AG04449 (cell line): ENCODE measurements at regions of chr5 and their contacts with region 1.

Region 1: DNA sequence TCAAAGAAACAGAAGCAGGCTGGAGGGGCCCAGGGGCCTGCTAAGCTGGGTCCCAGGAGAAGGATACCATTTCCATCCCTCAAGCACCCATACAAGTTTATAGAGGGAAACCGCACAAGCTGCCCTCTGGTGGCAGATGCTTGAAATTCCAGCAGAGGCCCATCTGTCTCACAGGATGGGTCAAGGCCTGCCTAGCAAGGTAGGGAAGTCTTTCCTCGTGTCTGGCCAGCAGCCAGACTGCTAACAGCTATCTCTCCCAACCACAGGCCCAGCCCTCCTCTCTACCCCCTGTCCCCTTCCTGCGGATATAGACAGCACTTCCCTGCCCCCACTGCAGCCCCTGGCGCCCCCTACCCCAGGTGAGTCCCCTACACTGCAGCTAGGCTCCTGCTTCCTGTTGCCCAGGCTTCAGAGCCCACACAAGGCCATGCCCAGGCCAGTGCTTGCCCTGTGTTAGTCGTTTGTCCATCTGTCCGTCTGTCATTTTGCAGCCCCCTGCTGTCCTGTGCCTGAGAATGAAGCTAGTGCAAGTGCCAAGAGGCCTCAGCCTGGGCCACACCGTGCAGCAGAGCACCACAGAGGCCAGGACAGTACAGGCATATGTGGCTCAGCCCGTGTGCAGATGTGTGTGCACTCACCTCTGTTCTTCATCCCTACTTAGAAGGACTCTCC is 26.2 kb downstream of the TCF7 start:
- DNase-seq: peak; percentile 4
- H3K4me3 ChIP-seq: no peak overlapping the region
- CTCF ChIP-seq: peak; percentile 80

Region 2: GRCh38 chr5:133868946-133869518 is 271.6 kb before region 1 on chr5:
- CTCF ChIA-PET with region 1: no interaction called
- POLR2A ChIA-PET with region 1: no interaction called
- DNase-seq: no peak
- H3K4me3 ChIP-seq: no peak overlapping the region
- CTCF ChIP-seq: peak; percentile 79

Region 3: GRCh38 chr5:134026521-134027268 is 114.0 kb before region 1 on chr5:
- CTCF ChIA-PET with region 1: interaction called, 1,500 read pairs
- POLR2A ChIA-PET with region 1: no interaction called
- DNase-seq: no peak
- H3K4me3 ChIP-seq: no peak overlapping the region
- CTCF ChIP-seq: peak; percentile 74

Region 4: DNA sequence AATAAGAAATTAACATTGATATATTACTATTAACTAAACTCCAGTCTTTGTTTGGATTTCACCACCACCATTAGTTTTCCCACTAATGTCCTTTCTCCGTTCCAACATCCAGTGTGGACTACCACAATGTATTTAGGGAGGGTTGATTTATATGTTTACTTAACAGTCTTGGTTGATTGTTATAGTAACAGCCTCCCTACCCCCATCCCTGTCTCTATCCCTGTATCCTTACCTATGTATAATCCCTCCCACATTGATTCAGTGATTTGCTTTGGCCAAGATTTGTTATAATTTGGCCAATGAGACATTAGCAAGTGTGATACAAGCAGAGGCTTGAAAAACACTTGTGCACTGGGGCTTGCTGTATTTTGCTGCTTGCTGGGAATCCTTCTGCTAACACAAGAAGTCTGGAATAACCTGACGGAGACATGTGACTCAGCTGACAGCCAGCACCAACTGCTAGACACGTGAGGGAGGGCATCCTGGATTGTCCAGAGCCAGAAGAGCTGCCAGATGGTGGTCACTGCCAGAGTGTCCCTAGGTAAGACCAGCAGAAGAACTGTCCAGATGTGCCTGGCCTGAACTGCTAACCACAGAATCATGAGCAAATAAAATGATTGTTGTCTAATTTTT is 77.4 kb before region 1 on chr5:
- CTCF ChIA-PET with region 1: interaction called, 17 read pairs
- POLR2A ChIA-PET with region 1: no interaction called
- DNase-seq: no peak
- H3K4me3 ChIP-seq: no peak overlapping the region
- CTCF ChIP-seq: no peak

Region 5: DNA sequence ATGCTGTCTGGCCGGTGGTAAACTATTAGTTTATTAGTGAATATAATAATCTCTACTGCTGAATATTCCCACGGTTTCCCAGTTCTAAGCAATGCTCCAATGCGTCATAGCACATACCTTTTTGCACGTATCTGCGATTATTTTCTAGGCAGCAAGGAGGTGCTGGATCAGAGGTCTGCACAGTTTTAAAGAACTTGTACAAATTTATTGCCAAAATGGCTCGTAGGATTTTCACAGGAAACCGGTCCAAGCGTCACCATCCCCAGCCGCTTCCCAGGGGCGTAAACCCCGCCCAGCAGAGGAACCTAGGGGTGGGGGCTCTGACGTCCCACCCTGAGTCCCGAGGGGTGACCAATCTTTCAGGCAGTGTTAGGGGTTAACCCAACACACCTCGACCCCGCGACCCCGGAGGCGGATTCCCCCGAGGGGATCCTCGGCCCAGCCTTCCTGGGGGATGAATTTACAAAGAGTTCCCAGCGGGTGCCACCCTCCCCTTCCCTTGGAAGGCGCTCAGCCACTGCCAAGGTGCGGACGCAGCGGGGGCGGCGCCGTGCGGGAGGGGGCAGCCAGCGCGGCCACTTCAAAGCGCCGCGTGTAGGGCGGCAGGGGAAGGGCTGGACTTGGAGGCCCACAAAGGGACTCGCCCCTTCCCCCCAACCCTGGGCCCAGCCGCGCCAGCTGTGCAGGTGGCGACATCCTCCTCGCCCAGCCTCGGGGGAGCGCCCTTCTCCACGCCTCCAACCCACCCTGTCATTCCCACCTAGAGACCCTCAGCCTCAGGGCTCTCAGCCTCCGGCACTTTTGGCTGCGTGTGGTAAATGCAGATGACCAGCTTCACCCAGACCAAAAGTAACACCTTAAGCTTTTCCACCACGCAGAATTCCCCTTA is 69.7 kb before region 1 on chr5:
- CTCF ChIA-PET with region 1: interaction called, 18 read pairs
- POLR2A ChIA-PET with region 1: no interaction called
- DNase-seq: no peak
- H3K4me3 ChIP-seq: peak overlapping the region; percentile 29
- CTCF ChIP-seq: no peak

Region 6: GRCh38 chr5:134113902-134114875 is 26.5 kb before region 1 on chr5 and contains the start of gene TCF7:
- CTCF ChIA-PET with region 1: interaction called, 659 read pairs
- POLR2A ChIA-PET with region 1: no interaction called
- DNase-seq: no peak
- H3K4me3 ChIP-seq: peak within 1 kb of the TSS; percentile 62
- CTCF ChIP-seq: no peak

Region 7: GRCh38 chr5:134176511-134177368 is 36.1 kb after region 1 on chr5 and contains the start of gene SKP1:
- CTCF ChIA-PET with region 1: interaction called, 18 read pairs
- POLR2A ChIA-PET with region 1: interaction called, 5 read pairs
- DNase-seq: no peak
- H3K4me3 ChIP-seq: peak within 1 kb of the TSS; percentile 97
- CTCF ChIP-seq: no peak

Region 8: DNA sequence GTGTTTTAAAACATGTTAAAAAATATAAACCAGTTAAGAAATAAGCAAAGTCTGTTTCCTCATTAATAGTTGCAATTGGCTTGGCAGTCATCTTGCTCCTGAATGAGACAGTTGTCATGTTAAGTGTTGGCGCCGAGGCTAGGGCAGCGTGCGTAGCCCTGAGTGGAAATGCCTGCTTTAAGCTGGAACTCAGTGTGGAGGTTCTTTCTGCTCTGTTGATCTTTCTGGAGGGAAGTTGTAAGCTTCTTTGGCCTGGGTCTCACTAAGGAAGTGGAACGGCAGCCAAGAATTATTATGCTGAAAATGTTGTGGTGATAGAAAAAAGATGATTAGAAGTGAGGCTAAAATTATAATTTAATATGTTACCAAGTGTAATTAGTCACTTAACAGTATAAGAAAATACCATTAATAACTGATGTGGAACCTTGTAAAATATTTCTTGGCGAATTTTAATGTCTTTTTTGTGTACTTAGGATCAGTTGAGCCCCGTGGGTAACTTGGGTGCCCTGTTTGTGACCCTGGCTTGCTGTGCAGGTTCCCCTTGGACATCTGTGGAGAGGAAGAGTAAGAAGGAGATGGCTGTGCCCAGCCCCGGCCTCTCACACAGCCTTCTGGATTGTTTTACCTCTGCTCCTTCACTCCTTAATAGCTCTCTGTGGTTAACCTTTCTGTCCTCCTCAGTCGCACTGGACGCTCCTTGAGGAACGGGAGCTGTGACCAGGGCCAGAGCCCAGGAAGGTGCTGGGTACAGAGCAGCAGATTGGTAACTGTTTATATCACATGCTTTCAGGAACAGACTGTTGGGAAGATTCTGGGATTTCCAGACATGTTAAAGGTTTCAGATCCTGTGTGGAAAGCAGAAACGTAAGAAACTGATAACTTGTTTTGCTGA is 795.3 kb after region 1 on chr5:
- CTCF ChIA-PET with region 1: no interaction called
- POLR2A ChIA-PET with region 1: no interaction called
- DNase-seq: no peak
- H3K4me3 ChIP-seq: no peak overlapping the region
- CTCF ChIP-seq: no peak